Activated CD8-positive, alpha-beta T cell treated with anti-CD3 and anti-CD28 coated beads for 36 hours (primary cell): ENCODE measurements at regions of chr17 and their contacts with region 1.

Region 1: GRCh38 chr17:58631523-58632323 is 60.1 kb downstream of the TEX14 start:
- DNase-seq: peak; percentile 96
- ATAC-seq: peak; percentile 91
- H3K4me3 Mint-ChIP-seq: no peak overlapping the region
- H3K27ac Mint-ChIP-seq: no peak overlapping the region
- H3K4me1 Mint-ChIP-seq: peaks cover 3% of the 10 kb centered on the region
- H3K27me3 Mint-ChIP-seq: no peaks in the 10 kb centered on the region
- CTCF ChIP-seq: no peak

Region 2: DNA sequence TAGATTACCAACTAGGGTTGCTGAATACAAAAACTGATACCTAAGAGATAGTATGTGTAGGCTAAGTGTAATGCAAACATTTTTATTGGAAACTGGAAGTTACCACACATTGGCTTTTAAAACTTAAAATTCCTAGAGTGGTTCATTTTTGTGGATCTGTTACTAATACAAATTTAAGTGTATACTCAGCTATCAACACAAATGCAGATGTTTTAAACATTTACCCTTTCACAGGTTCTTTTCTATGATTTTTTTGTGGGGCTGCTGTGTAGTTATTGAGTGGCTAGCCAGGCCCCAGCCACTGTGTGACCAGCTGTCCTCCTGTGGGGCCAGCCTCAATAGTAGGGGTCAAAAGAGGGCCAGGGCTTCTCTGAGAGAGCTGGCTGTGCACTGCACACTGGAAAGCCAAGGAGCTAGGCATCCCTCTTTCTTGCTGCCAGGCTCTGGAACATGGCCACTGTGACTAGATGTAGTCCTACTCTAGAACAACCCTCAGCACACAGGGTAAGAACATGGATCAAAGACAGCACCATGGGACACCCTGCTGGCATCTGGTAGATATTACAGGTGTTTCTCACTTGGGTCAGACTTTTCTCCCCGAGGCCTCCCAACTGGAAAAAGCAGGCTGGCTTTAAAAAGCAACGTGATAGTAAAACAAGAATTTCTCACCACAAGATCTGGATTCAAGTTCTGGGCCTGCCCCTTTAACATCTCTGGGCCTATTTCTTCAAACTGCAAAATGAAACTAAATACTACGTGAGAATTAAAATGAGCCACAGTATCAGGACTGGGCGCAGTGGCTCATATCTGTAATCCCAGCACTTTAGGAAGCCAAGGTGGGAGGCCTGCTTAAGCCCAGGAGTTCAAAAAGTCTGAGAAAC is 636.4 kb before region 1 on chr17:
- CTCF ChIA-PET with region 1: no interaction called
- POLR2A ChIA-PET with region 1: no interaction called
- intact Hi-C with region 1: no loop called
- DNase-seq: peak; percentile 76
- ATAC-seq: peak; percentile 89
- H3K4me3 Mint-ChIP-seq: no peak overlapping the region
- H3K27ac Mint-ChIP-seq: peak overlapping the region; percentile 40
- H3K4me1 Mint-ChIP-seq: peaks cover 72% of the 10 kb centered on the region
- H3K27me3 Mint-ChIP-seq: no peaks in the 10 kb centered on the region
- CTCF ChIP-seq: peak; percentile 73

Region 3: GRCh38 chr17:58337600-58338453 is 293.9 kb before region 1 on chr17:
- CTCF ChIA-PET with region 1: no interaction called
- POLR2A ChIA-PET with region 1: interaction called, 19 read pairs
- intact Hi-C with region 1: loop called (anchors 10 kb)
- DNase-seq: peak; percentile 98
- ATAC-seq: peak; percentile 60
- H3K4me3 Mint-ChIP-seq: peak overlapping the region; percentile 81
- H3K27ac Mint-ChIP-seq: peak overlapping the region; percentile 96
- H3K4me1 Mint-ChIP-seq: peaks cover 3% of the 10 kb centered on the region
- H3K27me3 Mint-ChIP-seq: no peaks in the 10 kb centered on the region
- CTCF ChIP-seq: no peak

Region 4: GRCh38 chr17:58541249-58541648 is 90.5 kb before region 1 on chr17:
- CTCF ChIA-PET with region 1: interaction called, 4 read pairs
- POLR2A ChIA-PET with region 1: interaction called, 10 read pairs
- intact Hi-C with region 1: no loop called
- DNase-seq: no peak
- ATAC-seq: peak; percentile 42
- H3K4me3 Mint-ChIP-seq: no peak overlapping the region
- H3K27ac Mint-ChIP-seq: no peak overlapping the region
- H3K4me1 Mint-ChIP-seq: no peaks in the 10 kb centered on the region
- H3K27me3 Mint-ChIP-seq: no peaks in the 10 kb centered on the region
- CTCF ChIP-seq: peak; percentile 49

Region 5: GRCh38 chr17:58587702-58588254 is 43.9 kb before region 1 on chr17:
- CTCF ChIA-PET with region 1: interaction called, 17 read pairs
- POLR2A ChIA-PET with region 1: interaction called, 51 read pairs
- intact Hi-C with region 1: no loop called
- DNase-seq: peak; percentile 70
- ATAC-seq: peak; percentile 89
- H3K4me3 Mint-ChIP-seq: no peak overlapping the region
- H3K27ac Mint-ChIP-seq: no peak overlapping the region
- H3K4me1 Mint-ChIP-seq: no peaks in the 10 kb centered on the region
- H3K27me3 Mint-ChIP-seq: no peaks in the 10 kb centered on the region
- CTCF ChIP-seq: peak; percentile 97

Region 6: DNA sequence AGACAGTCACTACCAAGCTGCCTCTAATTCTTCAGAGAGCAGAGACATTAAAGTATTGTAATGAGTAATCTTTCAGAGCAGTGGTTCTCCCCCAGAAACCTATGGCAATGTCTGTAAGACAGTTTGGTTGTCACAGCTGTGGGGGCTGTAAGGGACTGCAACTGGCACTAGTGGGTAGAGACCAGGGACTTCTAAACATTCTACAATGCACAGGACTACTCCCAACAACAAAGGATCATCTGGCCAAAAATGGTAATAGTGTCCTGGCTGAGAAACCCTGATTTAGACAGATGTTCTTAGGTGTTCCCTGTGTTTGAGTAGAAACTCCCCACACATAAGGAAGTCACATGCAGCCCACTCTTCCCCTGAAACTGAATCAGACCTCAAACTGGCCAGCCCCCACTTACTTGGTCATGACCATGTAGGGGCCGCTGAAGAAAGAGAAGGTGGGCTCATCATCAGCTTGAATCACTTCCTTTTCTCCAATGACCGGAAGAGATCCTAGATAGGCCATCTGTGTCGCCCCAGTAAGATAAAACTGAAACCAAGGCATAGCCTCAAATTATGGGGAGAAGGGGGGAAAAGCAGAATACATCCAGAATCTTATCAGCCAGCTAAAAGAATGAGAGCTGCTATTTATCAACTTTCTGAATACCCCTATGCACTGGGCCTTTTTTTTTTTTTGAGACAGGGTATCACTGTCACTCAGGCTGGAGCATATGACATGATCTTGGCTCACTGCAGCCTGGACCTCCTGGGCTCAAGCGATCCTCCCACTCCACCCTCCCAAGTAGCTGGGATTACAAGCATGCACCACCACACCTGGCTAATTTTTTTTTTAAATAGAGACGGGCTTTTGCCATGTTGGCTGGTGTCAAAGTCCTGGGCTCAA is 15.7 kb before region 1 on chr17:
- CTCF ChIA-PET with region 1: interaction called, 9 read pairs
- POLR2A ChIA-PET with region 1: interaction called, 116 read pairs
- intact Hi-C with region 1: no loop called
- DNase-seq: peak; percentile 36
- ATAC-seq: peak; percentile 80
- H3K4me3 Mint-ChIP-seq: no peak overlapping the region
- H3K27ac Mint-ChIP-seq: peak overlapping the region; percentile 52
- H3K4me1 Mint-ChIP-seq: peaks cover 9% of the 10 kb centered on the region
- H3K27me3 Mint-ChIP-seq: no peaks in the 10 kb centered on the region
- CTCF ChIP-seq: no peak

Region 7: GRCh38 chr17:58658804-58659713 is 27.3 kb after region 1 on chr17:
- CTCF ChIA-PET with region 1: interaction called, 4 read pairs
- POLR2A ChIA-PET with region 1: interaction called, 235 read pairs
- intact Hi-C with region 1: loop called (anchors 1 kb)
- DNase-seq: peak; percentile 93
- ATAC-seq: peak; percentile 91
- H3K4me3 Mint-ChIP-seq: peak overlapping the region; percentile 72
- H3K27ac Mint-ChIP-seq: peak overlapping the region; percentile 99
- H3K4me1 Mint-ChIP-seq: peaks cover 18% of the 10 kb centered on the region
- H3K27me3 Mint-ChIP-seq: peaks cover 9% of the 10 kb centered on the region
- CTCF ChIP-seq: no peak

Region 8: DNA sequence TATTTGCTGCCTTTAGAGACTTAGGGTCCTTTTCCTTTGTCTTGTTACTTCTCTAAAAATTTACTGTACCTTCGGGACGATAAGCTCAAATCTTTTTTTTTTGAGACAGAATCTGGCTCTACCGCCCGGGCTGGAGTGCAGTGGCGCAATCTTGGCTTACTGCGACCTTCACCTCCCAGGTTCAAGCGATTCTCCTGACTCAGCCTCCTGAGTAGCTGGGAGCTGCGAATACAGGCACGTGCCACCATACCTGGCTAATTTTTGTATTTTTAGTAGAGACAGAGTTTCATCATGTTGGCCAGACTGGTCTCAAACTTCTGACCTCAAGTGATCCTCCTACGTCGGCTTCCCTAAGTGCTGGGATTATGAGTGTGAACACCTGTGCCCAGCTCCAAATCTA is 68.0 kb after region 1 on chr17:
- CTCF ChIA-PET with region 1: no interaction called
- POLR2A ChIA-PET with region 1: interaction called, 11 read pairs
- intact Hi-C with region 1: no loop called
- DNase-seq: no peak
- ATAC-seq: no peak
- H3K4me3 Mint-ChIP-seq: no peak overlapping the region
- H3K27ac Mint-ChIP-seq: no peak overlapping the region
- H3K4me1 Mint-ChIP-seq: peaks cover 9% of the 10 kb centered on the region
- H3K27me3 Mint-ChIP-seq: no peaks in the 10 kb centered on the region
- CTCF ChIP-seq: no peak

Region 9: GRCh38 chr17:58786613-58787295 is 155.0 kb after region 1 on chr17:
- CTCF ChIA-PET with region 1: no interaction called
- POLR2A ChIA-PET with region 1: no interaction called
- intact Hi-C with region 1: no loop called
- DNase-seq: no peak
- ATAC-seq: no peak
- H3K4me3 Mint-ChIP-seq: no peak overlapping the region
- H3K27ac Mint-ChIP-seq: no peak overlapping the region
- H3K4me1 Mint-ChIP-seq: peaks cover 9% of the 10 kb centered on the region
- H3K27me3 Mint-ChIP-seq: peaks cover 4% of the 10 kb centered on the region
- CTCF ChIP-seq: no peak